ENCODE measurements at regions of chr19 and their contacts with region 1.

Region 1: DNA sequence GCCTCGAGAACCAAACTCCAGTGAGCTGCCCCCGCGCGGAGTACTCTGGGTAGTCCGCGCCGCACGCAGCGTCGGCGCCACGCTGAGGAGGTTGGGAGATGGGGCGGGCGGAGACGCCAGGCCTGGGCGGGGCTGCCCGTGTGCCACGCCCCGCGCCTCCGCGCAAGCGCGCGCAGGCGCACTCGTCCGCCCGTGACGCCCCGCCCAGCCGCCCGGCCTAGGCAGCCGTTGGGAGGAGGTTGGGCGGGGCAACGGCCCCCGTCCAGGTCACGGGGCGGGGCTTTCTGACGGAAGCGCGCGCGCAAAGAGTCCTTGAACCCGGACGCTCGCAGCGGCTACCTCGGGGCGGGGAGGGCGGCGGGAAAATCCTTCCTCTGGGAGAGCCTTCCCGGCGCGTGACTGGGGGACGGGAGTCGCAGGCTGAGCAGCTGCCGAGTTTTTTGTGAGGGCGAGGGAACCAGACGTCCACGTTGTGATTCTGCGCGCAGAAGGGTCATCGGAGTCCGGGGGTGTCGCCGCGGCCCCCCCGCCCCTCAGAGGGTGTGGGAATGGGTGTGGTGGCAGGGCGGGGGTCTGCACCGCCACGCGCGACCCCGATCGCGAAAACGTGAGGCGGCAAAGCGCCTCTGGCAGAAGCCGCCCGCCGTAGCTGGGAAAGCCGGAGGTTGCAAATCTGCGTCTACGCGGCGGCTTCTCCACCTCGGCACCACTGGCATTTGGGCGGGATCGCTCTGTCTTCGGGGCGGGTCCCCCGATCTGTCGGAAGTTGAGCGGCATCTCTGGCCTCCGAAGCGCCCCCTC is at the start of gene MED26:
- DNase-seq: peak; percentile 92
- H3K4me3 Mint-ChIP-seq: peak within 1 kb of the TSS; percentile 92
- H3K27ac Mint-ChIP-seq: peak within 1 kb of the TSS; percentile 95
- H3K4me1 Mint-ChIP-seq: peaks cover 20% of the 10 kb centered on the region
- H3K27me3 Mint-ChIP-seq: no peaks in the 10 kb centered on the region
- CTCF ChIP-seq: no peak
- total RNA-seq, gene MED26: 11.1 and 12.9 TPM in 2 replicates

Region 2: DNA sequence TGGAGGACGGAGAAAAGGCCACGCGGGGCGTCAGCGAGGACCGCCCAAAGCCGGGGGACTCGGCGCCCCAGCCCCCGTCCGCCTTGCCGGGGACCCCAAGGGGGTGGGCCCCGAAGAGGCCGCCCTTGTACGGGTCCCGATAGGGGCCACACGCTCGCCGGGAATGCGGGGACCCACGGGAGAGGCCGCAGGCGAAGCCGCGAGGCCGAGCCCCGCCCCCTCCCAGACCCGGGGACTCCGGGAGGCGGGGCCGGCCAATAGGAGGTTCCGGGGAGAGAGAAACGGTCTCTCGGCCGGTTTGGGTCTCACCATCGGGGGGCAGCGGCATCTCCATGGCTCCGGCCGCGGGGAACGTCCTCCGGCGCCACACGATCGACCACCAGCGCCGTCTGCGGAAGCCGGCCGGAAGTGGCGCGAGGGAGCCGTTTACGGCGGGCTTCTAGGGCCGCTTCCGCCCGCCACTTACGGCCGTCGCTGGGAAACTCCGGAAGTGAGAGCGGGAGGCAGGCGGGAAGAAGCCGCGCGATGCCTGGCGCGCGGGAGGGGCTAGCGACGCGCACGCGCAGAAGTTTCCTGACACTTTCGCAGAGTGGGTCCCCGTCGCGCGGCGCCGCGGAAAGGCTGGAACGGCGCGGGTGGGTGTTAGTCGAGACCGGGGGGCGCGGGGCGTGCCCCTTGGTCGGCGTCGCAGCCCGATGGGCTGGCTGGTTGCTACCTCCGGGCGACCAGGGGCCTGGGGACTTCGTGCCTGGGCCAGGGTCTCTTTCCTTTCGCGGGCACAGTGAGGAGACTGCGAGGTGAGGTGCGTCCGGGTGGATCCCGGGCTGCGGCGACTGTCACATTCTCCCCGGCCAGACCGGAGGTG is 86.1 kb before region 1 on chr19 and contains the start of gene CHERP:
- CTCF ChIA-PET with region 1: no interaction called
- POLR2A ChIA-PET with region 1: interaction called, 20 read pairs
- intact Hi-C with region 1: no loop called
- DNase-seq: peak; percentile 94
- H3K4me3 Mint-ChIP-seq: peak within 1 kb of the TSS; percentile 81
- H3K27ac Mint-ChIP-seq: peak within 1 kb of the TSS; percentile 63
- H3K4me1 Mint-ChIP-seq: peaks cover 9% of the 10 kb centered on the region
- H3K27me3 Mint-ChIP-seq: no peaks in the 10 kb centered on the region
- CTCF ChIP-seq: no peak
- total RNA-seq, gene CHERP: 45.6 and 51.6 TPM in 2 replicates

Region 3: DNA sequence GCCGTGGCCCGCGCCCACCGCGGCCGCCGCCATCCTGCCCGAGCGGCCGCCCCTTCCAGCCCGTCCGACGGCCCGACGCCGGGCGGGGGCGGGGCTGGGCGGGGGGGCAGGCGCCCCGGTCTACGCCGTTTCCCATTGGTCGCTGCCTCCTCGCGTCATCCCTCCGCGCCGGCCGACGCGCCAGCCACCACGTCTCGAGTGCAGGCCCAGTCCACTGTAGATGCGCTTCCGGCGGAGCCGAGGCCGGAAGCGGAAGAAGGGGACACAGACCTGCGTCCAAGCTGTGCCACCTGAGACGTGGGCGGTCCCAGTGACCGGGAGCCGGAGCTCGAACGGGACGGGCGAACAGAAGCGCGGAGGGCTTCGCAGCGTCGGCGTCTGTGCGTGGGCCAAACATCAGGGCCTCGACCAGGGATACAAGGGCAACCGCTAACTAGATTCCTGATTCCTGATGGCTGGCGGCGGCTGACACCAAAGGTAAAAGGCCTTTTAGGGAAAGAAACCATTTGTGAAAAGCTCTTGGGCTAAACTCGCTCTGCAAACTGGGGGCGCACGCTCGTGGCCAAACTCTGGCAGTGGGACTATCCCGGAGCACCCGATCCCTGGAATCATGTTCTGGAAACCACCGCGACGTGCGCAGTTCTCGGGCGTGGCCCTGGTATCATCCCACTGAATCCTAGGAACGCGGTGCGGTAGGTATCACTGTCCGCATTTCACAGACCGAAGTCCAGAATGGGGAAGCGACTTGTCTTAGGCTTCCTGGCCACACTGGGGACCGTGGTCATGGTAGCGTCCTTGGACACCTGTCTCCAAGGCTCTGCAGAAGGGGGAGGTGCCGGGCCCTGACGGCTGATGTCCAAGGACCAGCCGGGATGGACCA is 55.8 kb before region 1 on chr19 and contains the start of gene SLC35E1:
- CTCF ChIA-PET with region 1: interaction called, 5 read pairs
- POLR2A ChIA-PET with region 1: interaction called, 41 read pairs
- intact Hi-C with region 1: loop called (anchors 1 kb)
- DNase-seq: peak; percentile 98
- H3K4me3 Mint-ChIP-seq: peak within 1 kb of the TSS; percentile 99
- H3K27ac Mint-ChIP-seq: peak within 1 kb of the TSS; percentile 99
- H3K4me1 Mint-ChIP-seq: peaks cover 37% of the 10 kb centered on the region
- H3K27me3 Mint-ChIP-seq: no peaks in the 10 kb centered on the region
- CTCF ChIP-seq: no peak
- total RNA-seq, gene SLC35E1: 62.2 and 62.6 TPM in 2 replicates

Region 4: DNA sequence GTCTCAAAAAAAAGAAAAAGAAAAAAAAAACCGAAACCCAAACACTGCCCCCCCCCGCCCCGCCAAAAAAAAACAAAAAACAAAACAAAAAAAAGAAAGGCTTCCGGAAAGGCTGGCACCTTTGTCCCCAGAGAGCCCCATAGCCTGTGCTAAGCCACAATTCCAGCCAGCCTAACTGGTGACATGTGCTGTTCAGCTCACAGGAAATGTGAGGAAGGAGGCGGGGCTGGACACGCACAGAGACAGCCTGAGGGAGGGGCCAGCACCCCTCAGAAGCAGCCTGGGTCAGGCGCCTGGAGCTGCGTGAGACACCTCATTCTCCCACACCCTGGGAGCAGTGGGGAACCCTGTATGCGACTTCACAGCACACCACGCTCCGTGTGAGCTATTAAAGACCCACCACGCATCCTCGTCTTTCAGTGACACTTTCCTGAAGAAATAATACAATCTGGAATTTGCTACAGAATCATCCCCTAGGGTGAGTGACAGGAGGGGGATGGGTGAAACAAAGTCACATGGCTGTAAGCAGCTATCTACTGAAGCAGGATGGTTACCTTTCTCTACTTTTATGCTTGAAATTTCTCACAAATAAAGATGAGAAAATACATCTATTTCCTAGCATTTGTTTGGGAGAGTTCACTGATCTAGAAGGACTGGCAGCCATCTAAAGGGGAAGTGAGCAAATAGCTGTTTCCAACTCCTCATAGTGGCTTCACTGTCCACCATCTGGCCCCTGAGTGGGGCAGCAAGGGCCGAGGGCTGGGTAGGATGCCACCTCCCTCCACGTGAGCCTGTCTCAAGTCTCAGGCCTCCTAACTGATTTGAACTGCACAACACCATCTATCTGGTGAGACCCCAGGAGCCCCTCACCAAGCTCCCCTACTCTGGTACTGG is 43.9 kb before region 1 on chr19:
- CTCF ChIA-PET with region 1: interaction called, 6 read pairs
- POLR2A ChIA-PET with region 1: interaction called, 18 read pairs
- intact Hi-C with region 1: no loop called
- DNase-seq: peak; percentile 84
- H3K4me3 Mint-ChIP-seq: peak overlapping the region; percentile 47
- H3K27ac Mint-ChIP-seq: peak overlapping the region; percentile 78
- H3K4me1 Mint-ChIP-seq: peaks cover 38% of the 10 kb centered on the region
- H3K27me3 Mint-ChIP-seq: no peaks in the 10 kb centered on the region
- CTCF ChIP-seq: no peak

Region 5: DNA sequence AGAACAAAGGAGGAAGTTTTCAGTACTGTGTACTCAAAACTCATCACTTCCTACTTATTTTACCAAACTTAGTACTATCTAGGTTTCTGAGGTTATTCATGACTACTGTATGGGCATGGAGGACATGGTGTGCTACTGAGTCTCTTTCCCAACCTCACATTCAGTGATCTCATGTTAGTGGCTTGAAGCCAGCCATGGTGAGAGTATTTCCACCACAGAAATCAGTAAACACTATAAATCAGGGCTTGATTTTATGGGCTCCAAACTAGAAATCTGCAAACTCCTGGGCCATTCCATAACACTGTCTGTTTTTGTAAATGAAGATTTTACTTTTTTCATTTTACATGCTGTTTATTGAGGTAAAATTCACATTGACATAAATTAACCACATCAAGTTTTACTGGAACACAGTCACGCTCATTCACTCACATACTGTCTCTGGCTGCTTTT is 20.1 kb before region 1 on chr19:
- CTCF ChIA-PET with region 1: interaction called, 9 read pairs
- POLR2A ChIA-PET with region 1: interaction called, 13 read pairs
- intact Hi-C with region 1: no loop called
- DNase-seq: peak; percentile 69
- H3K4me3 Mint-ChIP-seq: peak overlapping the region; percentile 1
- H3K27ac Mint-ChIP-seq: peak overlapping the region; percentile 74
- H3K4me1 Mint-ChIP-seq: peaks cover 40% of the 10 kb centered on the region
- H3K27me3 Mint-ChIP-seq: no peaks in the 10 kb centered on the region
- CTCF ChIP-seq: no peak

Region 6: GRCh38 chr19:16615808-16616207 is 12.6 kb before region 1 on chr19:
- CTCF ChIA-PET with region 1: interaction called, 9 read pairs
- POLR2A ChIA-PET with region 1: interaction called, 16 read pairs
- intact Hi-C with region 1: no loop called
- DNase-seq: no peak
- H3K4me3 Mint-ChIP-seq: no peak overlapping the region
- H3K27ac Mint-ChIP-seq: no peak overlapping the region
- H3K4me1 Mint-ChIP-seq: peaks cover 45% of the 10 kb centered on the region
- H3K27me3 Mint-ChIP-seq: no peaks in the 10 kb centered on the region
- CTCF ChIP-seq: no peak

Region 7: GRCh38 chr19:16659831-16660708 is 31.7 kb after region 1 on chr19 and contains the start of gene SMIM7:
- CTCF ChIA-PET with region 1: interaction called, 4 read pairs
- POLR2A ChIA-PET with region 1: interaction called, 28 read pairs
- intact Hi-C with region 1: no loop called
- DNase-seq: peak; percentile 99
- H3K4me3 Mint-ChIP-seq: peak within 1 kb of the TSS; percentile 95
- H3K27ac Mint-ChIP-seq: peak within 1 kb of the TSS; percentile 94
- H3K4me1 Mint-ChIP-seq: peaks cover 7% of the 10 kb centered on the region
- H3K27me3 Mint-ChIP-seq: no peaks in the 10 kb centered on the region
- CTCF ChIP-seq: no peak
- total RNA-seq, gene SMIM7: 69.3 and 81.8 TPM in 2 replicates

Measured in MCF 10A (cell line).